CD4-positive, alpha-beta memory T cell (primary cell): ENCODE measurements at regions of chr2 and their contacts with region 1.

Region 1: GRCh38 chr2:219206442-219207253 is at the start of gene ZFAND2B:
- DNase-seq: peak; percentile 93 to 98 (median 95)
- H3K4me3 ChIP-seq: peak within 1 kb of the TSS; percentile 67 to 88
- H3K4me3 Mint-ChIP-seq: peak within 1 kb of the TSS; percentile 88 to 95 (median 94)
- H3K27ac ChIP-seq: peak within 1 kb of the TSS; percentile 87
- H3K27ac Mint-ChIP-seq: peak within 1 kb of the TSS; percentile 93 to 98 (median 97)
- H3K4me1 ChIP-seq: peaks cover 39% of the 10 kb centered on the region
- H3K4me1 Mint-ChIP-seq: peaks cover 22 to 54% (median 37%) of the 10 kb centered on the region in 4 donors
- H3K27me3 ChIP-seq: no peaks in the 10 kb centered on the region
- H3K27me3 Mint-ChIP-seq: no peaks in the 10 kb centered on the region
- total RNA-seq, gene ZFAND2B: 73.3 to 79.8 TPM

Region 2: GRCh38 chr2:218876562-218877219 is 330.0 kb before region 1 on chr2:
- CTCF ChIA-PET with region 1: no interaction called
- POLR2A ChIA-PET with region 1: no interaction called
- intact Hi-C with region 1: no loop called
- DNase-seq: peak; percentile 72 to 83 (median 76)
- H3K4me3 ChIP-seq: no peak overlapping the region
- H3K4me3 Mint-ChIP-seq: peak overlapping the region in 3 of 8 donors; percentile 15 to 62 (median 29)
- H3K27ac ChIP-seq: no peak overlapping the region
- H3K27ac Mint-ChIP-seq: peak overlapping the region; percentile 32 to 86 (median 65)
- H3K4me1 ChIP-seq: peaks cover 55% of the 10 kb centered on the region
- H3K4me1 Mint-ChIP-seq: peaks cover 29 to 61% (median 41%) of the 10 kb centered on the region in 4 donors
- H3K27me3 ChIP-seq: peaks cover 26% of the 10 kb centered on the region
- H3K27me3 Mint-ChIP-seq: peaks cover 22 to 30% of the 10 kb centered on the region in 2 donors

Region 3: GRCh38 chr2:219177552-219178376 is 28.9 kb before region 1 on chr2 and contains the start of gene RETREG2:
- CTCF ChIA-PET with region 1: interaction called, 253 read pairs
- POLR2A ChIA-PET with region 1: interaction called, 424 read pairs
- intact Hi-C with region 1: loop called (anchors 1 kb)
- DNase-seq: peak; percentile 88 to 91 (median 88)
- H3K4me3 ChIP-seq: peak within 1 kb of the TSS; percentile 81 to 96
- H3K4me3 Mint-ChIP-seq: peak within 1 kb of the TSS; percentile 91 to 98 (median 95)
- H3K27ac ChIP-seq: peak within 1 kb of the TSS; percentile 91
- H3K27ac Mint-ChIP-seq: peak within 1 kb of the TSS; percentile 96 to 99 (median 98)
- H3K4me1 ChIP-seq: peaks cover 66% of the 10 kb centered on the region
- H3K4me1 Mint-ChIP-seq: peaks cover 34 to 79% (median 62%) of the 10 kb centered on the region in 4 donors
- H3K27me3 ChIP-seq: no peaks in the 10 kb centered on the region
- H3K27me3 Mint-ChIP-seq: no peaks in the 10 kb centered on the region
- total RNA-seq, gene RETREG2: 123 to 128 TPM

Region 4: DNA sequence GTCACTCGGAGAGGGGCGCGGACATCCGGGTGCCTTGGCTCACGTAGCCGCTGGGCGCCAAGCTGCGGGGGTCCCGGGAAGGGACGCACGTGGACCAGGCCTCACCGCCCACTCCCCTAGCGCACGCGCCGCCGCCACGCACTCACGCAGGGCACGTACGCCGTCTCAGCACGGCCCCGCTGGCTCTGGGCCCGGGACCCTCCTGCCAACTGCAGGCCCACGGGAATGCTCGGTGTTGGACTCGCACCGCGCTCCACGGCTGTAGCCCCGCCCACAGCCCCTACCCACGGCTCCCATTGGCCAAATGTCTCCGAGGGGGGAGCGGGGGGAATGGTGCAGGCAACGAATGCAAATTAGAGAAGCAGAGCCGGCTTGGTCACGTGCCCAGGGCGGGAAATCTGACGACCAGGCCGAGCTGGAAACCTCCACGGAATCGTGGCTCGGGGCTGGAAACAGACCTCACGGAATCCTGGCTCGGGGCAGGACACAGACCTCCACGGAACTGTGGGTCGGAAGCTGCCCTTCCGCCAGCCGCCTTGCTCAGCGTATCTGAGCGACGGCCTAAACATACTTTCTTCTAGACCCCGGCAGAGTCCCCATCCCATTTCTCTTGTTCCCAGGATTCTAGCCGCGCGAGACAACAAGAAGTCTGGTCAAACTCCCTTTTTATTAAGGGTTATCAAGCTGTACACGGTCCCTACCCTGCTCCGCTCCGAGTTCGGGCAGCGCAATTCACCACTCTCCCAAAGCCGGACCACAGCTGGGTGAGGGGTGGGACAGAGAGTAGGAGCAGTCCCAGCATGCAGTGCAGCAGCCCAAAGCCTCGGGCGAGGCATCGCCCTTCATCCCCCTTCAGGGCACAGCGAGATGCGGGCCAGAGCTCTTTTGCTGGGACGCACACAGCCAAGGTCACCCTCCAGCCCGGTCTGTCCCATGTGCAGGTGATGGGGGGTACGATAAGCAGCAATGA is 12.4 kb after region 1 on chr2 and contains the start of gene ABCB6:
- CTCF ChIA-PET with region 1: interaction called, 7 read pairs
- POLR2A ChIA-PET with region 1: interaction called, 40 read pairs
- intact Hi-C with region 1: no loop called
- DNase-seq: peak; percentile 81 to 93 (median 83)
- H3K4me3 ChIP-seq: peak within 1 kb of the TSS; percentile 49 to 68
- H3K4me3 Mint-ChIP-seq: peak within 1 kb of the TSS; percentile 82 to 93 (median 84)
- H3K27ac ChIP-seq: peak within 1 kb of the TSS; percentile 53
- H3K27ac Mint-ChIP-seq: peak within 1 kb of the TSS; percentile 74 to 96 (median 88)
- H3K4me1 ChIP-seq: peaks cover 24% of the 10 kb centered on the region
- H3K4me1 Mint-ChIP-seq: peaks cover 8 to 25% (median 19%) of the 10 kb centered on the region in 4 donors
- H3K27me3 ChIP-seq: no peaks in the 10 kb centered on the region
- H3K27me3 Mint-ChIP-seq: no peaks in the 10 kb centered on the region
- total RNA-seq, gene ABCB6: 10.7 to 11.1 TPM

Region 5: GRCh38 chr2:219245148-219245898 is 38.7 kb after region 1 on chr2 and contains the starts of genes GLB1L and STK16:
- CTCF ChIA-PET with region 1: interaction called, 10 read pairs
- POLR2A ChIA-PET with region 1: interaction called, 34 read pairs
- intact Hi-C with region 1: no loop called
- DNase-seq: peak; percentile 85 to 88 (median 86)
- H3K4me3 ChIP-seq: peak within 1 kb of the TSS; percentile 45 to 97
- H3K4me3 Mint-ChIP-seq: peak within 1 kb of the TSS; percentile 85 to 99 (median 94)
- H3K27ac ChIP-seq: peak within 1 kb of the TSS; percentile 94
- H3K27ac Mint-ChIP-seq: peak within 1 kb of the TSS; percentile 96 to 99 (median 99)
- H3K4me1 ChIP-seq: peaks cover 59% of the 10 kb centered on the region
- H3K4me1 Mint-ChIP-seq: peaks cover 39 to 80% (median 56%) of the 10 kb centered on the region in 4 donors
- H3K27me3 ChIP-seq: no peaks in the 10 kb centered on the region
- H3K27me3 Mint-ChIP-seq: no peaks in the 10 kb centered on the region
- total RNA-seq, gene GLB1L: 1.5 to 2.5 TPM
- total RNA-seq, gene STK16: 19.3 to 21.1 TPM